ENCODE measurements at regions of chr11 and their contacts with region 1.

Region 1: GRCh38 chr11:45110562-45110961 is 35.9 kb upstream of the PRDM11 start:
- DNase-seq: no peak
- ATAC-seq: peak; percentile 78
- H3K4me3 Mint-ChIP-seq: no peak overlapping the region
- H3K27ac Mint-ChIP-seq: no peak overlapping the region
- H3K4me1 Mint-ChIP-seq: no peaks in the 10 kb centered on the region
- H3K27me3 Mint-ChIP-seq: peaks cover 17% of the 10 kb centered on the region
- CTCF ChIP-seq: peak; percentile 66

Region 2: DNA sequence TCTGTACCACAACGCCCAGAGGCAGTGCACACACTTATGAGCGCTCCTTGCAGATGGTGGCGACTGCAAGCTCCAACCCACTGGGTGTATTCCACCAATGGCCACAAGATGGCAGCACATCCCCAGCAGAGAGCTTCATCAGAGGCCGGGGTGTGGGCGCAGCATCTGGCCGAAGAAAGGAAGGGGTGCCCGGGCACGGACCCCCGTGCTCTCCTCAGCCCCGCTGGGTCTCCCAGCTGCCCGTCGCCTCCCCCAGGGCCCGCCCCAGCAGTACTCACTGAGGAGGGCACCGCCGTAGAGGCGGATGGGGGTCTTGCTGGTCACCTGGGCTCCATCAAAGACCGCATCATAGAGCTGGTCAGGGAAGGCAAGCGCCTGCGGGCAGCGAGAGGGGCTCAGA is 174.0 kb before region 1 on chr11:
- CTCF ChIA-PET with region 1: interaction called, 361 read pairs
- POLR2A ChIA-PET with region 1: interaction called, 10 read pairs
- DNase-seq: peak; percentile 93
- ATAC-seq: peak; percentile 72
- H3K4me3 Mint-ChIP-seq: no peak overlapping the region
- H3K27ac Mint-ChIP-seq: no peak overlapping the region
- H3K4me1 Mint-ChIP-seq: 0 out of 2 replicates have a peak, but pooled peaks cover 7% of the 10 kb centered on the region
- H3K27me3 Mint-ChIP-seq: no peaks in the 10 kb centered on the region; the same call in 1 of the 2 replicates
- CTCF ChIP-seq: peak; percentile 94

Region 3: GRCh38 chr11:45097721-45098493 is 12.7 kb before region 1 on chr11:
- CTCF ChIA-PET with region 1: interaction called, 17 read pairs
- POLR2A ChIA-PET with region 1: no interaction called
- DNase-seq: peak; percentile 88
- ATAC-seq: peak; percentile 46
- H3K4me3 Mint-ChIP-seq: no peak overlapping the region
- H3K27ac Mint-ChIP-seq: no peak overlapping the region
- H3K4me1 Mint-ChIP-seq: peaks cover 26% of the 10 kb centered on the region
- H3K27me3 Mint-ChIP-seq: peaks cover 5% of the 10 kb centered on the region; the same call in 1 of the 2 replicates
- CTCF ChIP-seq: no peak

Region 4: GRCh38 chr11:45180179-45180842 is 69.7 kb after region 1 on chr11:
- CTCF ChIA-PET with region 1: interaction called, 23 read pairs
- POLR2A ChIA-PET with region 1: no interaction called
- DNase-seq: peak; percentile 63
- ATAC-seq: peak; percentile 71
- H3K4me3 Mint-ChIP-seq: peak overlapping the region; percentile 82
- H3K27ac Mint-ChIP-seq: no peak overlapping the region
- H3K4me1 Mint-ChIP-seq: peaks cover 10% of the 10 kb centered on the region
- H3K27me3 Mint-ChIP-seq: peaks cover 9% of the 10 kb centered on the region; the same call in 1 of the 2 replicates
- CTCF ChIP-seq: no peak

Region 5: GRCh38 chr11:45245218-45246045 is 134.9 kb after region 1 on chr11:
- CTCF ChIA-PET with region 1: interaction called, 11 read pairs
- POLR2A ChIA-PET with region 1: no interaction called
- DNase-seq: no peak
- ATAC-seq: no peak
- H3K4me3 Mint-ChIP-seq: no peak overlapping the region
- H3K27ac Mint-ChIP-seq: no peak overlapping the region
- H3K4me1 Mint-ChIP-seq: 0 out of 2 replicates have a peak, but pooled peaks cover 3% of the 10 kb centered on the region
- H3K27me3 Mint-ChIP-seq: no peaks in the 10 kb centered on the region
- CTCF ChIP-seq: no peak

Region 6: DNA sequence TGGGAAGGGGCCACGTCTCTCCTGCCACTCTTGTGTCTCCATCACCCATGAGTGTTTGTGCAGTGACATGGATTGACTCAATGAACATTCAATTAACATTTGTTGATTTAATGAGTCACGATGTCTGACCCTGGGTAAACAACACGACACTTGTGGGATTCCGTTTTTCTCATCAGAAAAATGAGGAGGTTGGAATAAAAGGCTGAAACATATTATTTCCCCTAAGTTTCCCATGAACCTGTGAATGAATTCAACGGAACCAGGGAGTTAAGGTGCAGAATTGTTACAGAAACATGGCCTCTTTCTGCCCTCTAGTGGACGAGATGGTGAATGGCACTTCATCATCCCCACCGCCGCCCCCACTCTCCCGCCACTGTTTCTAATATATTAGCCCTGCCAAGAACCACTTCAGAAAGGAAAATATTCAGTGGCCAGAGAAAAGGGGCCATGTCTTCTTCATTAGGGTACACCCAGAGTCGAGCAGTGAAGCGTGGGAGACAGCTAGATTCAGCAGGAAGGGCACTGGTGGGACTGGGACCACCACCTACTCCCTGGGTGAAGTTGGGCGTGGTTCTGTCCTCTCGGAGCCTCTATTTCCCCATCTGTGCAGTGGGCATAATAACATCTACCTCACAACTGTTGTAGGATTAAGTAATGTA is 221.8 kb after region 1 on chr11:
- CTCF ChIA-PET with region 1: interaction called, 45 read pairs
- POLR2A ChIA-PET with region 1: interaction called, 3 read pairs
- DNase-seq: peak; percentile 53
- ATAC-seq: peak; percentile 66
- H3K4me3 Mint-ChIP-seq: no peak overlapping the region
- H3K27ac Mint-ChIP-seq: no peak overlapping the region
- H3K4me1 Mint-ChIP-seq: peaks cover 7% of the 10 kb centered on the region
- H3K27me3 Mint-ChIP-seq: peaks cover 34% of the 10 kb centered on the region
- CTCF ChIP-seq: peak; percentile 93

Region 7: GRCh38 chr11:45362636-45363035 is 252.1 kb after region 1 on chr11:
- CTCF ChIA-PET with region 1: no interaction called
- POLR2A ChIA-PET with region 1: no interaction called
- DNase-seq: no peak
- ATAC-seq: no peak
- H3K4me3 Mint-ChIP-seq: no peak overlapping the region
- H3K27ac Mint-ChIP-seq: no peak overlapping the region
- H3K4me1 Mint-ChIP-seq: no peaks in the 10 kb centered on the region
- H3K27me3 Mint-ChIP-seq: peaks cover 4% of the 10 kb centered on the region; the same call in 1 of the 2 replicates
- CTCF ChIP-seq: no peak

Region 8: GRCh38 chr11:45554230-45554967 is 443.8 kb after region 1 on chr11:
- CTCF ChIA-PET with region 1: no interaction called
- POLR2A ChIA-PET with region 1: no interaction called
- DNase-seq: no peak
- ATAC-seq: no peak
- H3K4me3 Mint-ChIP-seq: no peak overlapping the region
- H3K27ac Mint-ChIP-seq: no peak overlapping the region
- H3K4me1 Mint-ChIP-seq: peaks cover 5% of the 10 kb centered on the region
- H3K27me3 Mint-ChIP-seq: peaks cover 2% of the 10 kb centered on the region; the same call in 1 of the 2 replicates
- CTCF ChIP-seq: no peak

Measured in WTC11 (cell line).